Brain microvascular endothelial cell (primary cell): ENCODE measurements at regions of chr3 and their contacts with region 1.

Region 1: DNA sequence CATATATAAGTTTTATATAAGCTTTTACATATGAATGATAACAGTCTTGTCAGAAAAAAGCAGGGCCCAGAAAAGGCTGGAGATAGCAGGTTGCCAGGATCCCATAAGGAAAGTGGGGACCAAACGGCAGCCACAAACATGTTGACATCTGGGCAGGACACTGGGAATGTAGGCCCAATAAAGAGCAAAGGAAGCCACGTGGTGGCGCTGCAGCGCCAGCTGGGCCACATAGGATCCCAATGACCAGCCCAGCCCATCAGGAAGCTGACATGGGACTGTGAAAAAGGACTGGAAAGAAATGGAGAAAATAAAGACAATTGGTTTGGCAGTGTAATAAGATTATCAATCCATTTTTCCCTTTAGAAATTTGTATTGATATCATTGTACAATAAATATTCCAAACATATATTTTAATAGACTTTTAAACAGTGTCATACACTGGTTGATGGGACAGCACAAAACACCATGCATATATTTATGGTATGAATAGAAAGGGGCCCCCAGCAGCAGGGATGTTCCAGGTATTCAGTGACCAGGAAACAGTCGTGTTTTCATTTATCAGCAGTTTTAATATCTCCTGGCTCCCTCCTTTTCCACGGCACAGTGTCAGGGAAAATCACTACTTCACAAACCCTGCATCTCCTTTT is 89.0 kb upstream of the STRIT1 start:
- DNase-seq: peak; percentile 72
- H3K4me3 ChIP-seq: no peak overlapping the region
- H3K27ac ChIP-seq: no peak overlapping the region
- H3K27me3 ChIP-seq: no peaks in the 10 kb centered on the region
- CTCF ChIP-seq: peak; percentile 93

Region 2: GRCh38 chr3:155701882-155702465 is 319.5 kb after region 1 on chr3:
- in situ Hi-C with region 1: loop called (anchors 25 kb)
- DNase-seq: peak; percentile 6
- H3K4me3 ChIP-seq: no peak overlapping the region
- H3K27ac ChIP-seq: no peak overlapping the region
- H3K27me3 ChIP-seq: no peaks in the 10 kb centered on the region
- CTCF ChIP-seq: peak; percentile 23